Activated T-helper 2 cell treated with anti-CD3 and anti-CD28 coated beads, Interferon-gamma antibody, Interleukin-2, Interleukin-4, amounts not matched to agents 10 μg/mL and 5 μg/mL and 100 μg/mL, durations not matched to agents 14 hours and 24 hours and 36 hours (primary cell): ENCODE measurements at regions of chr6 and their contacts with region 1.

Region 1: GRCh38 chr6:132218059-132218696 is 183.1 kb downstream of the MOXD1 start:
- DNase-seq: no peak
- H3K4me3 Mint-ChIP-seq: no peak overlapping the region
- H3K27ac Mint-ChIP-seq: no peak overlapping the region
- H3K4me1 Mint-ChIP-seq: no peaks in the 10 kb centered on the region
- H3K27me3 Mint-ChIP-seq: peaks cover 5% of the 10 kb centered on the region

Region 2: GRCh38 chr6:131914967-131915751 is 303.0 kb before region 1 on chr6:
- intact Hi-C with region 1: loop called (anchors 1 kb)
- DNase-seq: peak; percentile 31
- H3K4me3 Mint-ChIP-seq: no peak overlapping the region
- H3K27ac Mint-ChIP-seq: no peak overlapping the region
- H3K4me1 Mint-ChIP-seq: peaks cover 40% of the 10 kb centered on the region
- H3K27me3 Mint-ChIP-seq: peaks cover 39% of the 10 kb centered on the region

Region 3: GRCh38 chr6:132041706-132042105 is 176.5 kb before region 1 on chr6:
- intact Hi-C with region 1: no loop called
- DNase-seq: no peak
- H3K4me3 Mint-ChIP-seq: no peak overlapping the region
- H3K27ac Mint-ChIP-seq: no peak overlapping the region
- H3K4me1 Mint-ChIP-seq: no peaks in the 10 kb centered on the region
- H3K27me3 Mint-ChIP-seq: no peaks in the 10 kb centered on the region

Region 4: GRCh38 chr6:132199343-132199742 is 18.8 kb before region 1 on chr6:
- intact Hi-C with region 1: no loop called
- DNase-seq: no peak
- H3K4me3 Mint-ChIP-seq: no peak overlapping the region
- H3K27ac Mint-ChIP-seq: no peak overlapping the region
- H3K4me1 Mint-ChIP-seq: no peaks in the 10 kb centered on the region
- H3K27me3 Mint-ChIP-seq: no peaks in the 10 kb centered on the region

Region 5: DNA sequence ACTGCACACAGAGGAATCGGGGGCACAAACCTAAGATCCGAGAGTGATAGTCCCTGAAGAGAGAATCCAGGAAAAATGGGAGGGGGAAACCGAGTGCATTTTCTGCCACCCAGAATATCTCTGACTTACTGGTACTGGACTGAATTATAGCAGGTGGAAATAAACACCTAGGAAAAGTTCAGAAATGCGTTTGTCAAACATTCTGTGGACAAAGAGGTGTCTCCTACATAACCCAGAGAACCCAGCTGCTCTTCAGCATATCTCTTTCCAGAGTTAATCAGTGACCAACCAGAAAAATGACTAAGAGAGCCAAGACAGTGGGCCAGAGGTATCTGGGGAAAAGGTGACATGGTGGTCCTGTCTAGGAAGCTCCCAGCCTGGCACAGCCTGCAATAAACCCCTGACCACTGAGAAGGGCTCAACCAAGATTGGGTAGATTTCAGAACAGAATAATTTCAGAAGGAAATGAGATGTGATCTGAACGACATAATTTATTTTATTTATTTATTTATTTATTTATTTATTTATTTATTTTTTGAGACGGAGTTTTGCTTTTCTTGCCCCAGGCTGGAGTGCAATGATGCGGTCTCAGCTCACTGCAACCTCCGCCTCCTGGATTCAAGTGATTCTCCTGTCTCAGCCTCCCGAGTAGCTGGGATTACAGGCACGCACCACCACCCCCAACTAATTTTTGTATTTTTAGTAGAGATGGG is 501.7 kb after region 1 on chr6:
- intact Hi-C with region 1: no loop called
- DNase-seq: no peak
- H3K4me3 Mint-ChIP-seq: no peak overlapping the region
- H3K27ac Mint-ChIP-seq: no peak overlapping the region
- H3K4me1 Mint-ChIP-seq: peaks cover 1% of the 10 kb centered on the region
- H3K27me3 Mint-ChIP-seq: peaks cover 7% of the 10 kb centered on the region